ENCODE measurements at regions of chr1 and their contacts with region 1.

Region 1: GRCh38 chr1:149899460-149900293 is at the start of gene BOLA1:
- DNase-seq: peak; percentile 66 to 89 (median 76)
- ATAC-seq: peak; percentile 98 to 99
- H3K4me3 Mint-ChIP-seq: peak within 1 kb of the TSS; percentile 85 to 96 (median 94)
- H3K27ac Mint-ChIP-seq: peak within 1 kb of the TSS; percentile 89 to 98 (median 96)
- H3K4me1 Mint-ChIP-seq: peaks cover 6 to 26% (median 17%) of the 10 kb centered on the region in 4 donors
- H3K27me3 Mint-ChIP-seq: peaks cover 0 to 2% (median 0%) of the 10 kb centered on the region in 5 donors
- polyA plus RNA-seq, gene BOLA1: 19.7 to 34.1 (median 24.3) TPM

Region 2: DNA sequence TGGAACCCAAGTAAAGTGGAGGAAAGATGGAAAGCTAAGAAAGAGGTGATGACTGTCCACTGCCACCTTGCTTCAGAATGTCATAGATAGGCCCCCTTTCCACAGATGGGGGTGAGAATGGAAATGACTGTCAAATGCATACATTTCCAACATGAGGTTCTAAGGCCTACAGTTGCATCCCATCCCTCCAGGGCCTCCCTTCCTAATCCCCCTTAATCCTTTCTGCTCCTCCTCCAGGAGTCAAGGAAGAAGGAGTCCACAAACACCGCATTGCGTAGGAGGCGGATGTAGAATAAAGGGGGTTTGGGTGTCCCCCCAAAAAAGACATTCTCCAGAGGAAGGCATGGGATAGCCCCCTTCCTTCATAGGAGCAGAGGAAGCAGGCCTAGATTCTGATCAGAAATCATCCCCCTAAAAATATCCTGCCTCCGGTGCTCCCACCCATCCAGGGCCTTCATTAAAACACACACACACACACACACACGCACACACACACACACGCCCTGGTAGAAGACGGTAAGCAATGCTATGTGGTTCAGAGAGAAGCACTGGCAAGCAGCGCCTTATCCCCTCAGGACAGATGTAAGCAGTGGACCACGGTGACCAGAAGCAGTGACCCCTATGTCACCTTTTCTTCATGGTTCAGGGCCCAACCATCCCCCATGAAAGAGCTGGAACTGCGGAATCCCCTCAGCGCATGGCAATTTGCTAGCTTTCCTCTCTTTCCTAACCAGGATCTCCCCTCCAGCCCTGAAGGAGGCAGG is 15.9 kb after region 1 on chr1:
- POLR2A ChIA-PET with region 1: no interaction called
- DNase-seq: no peak
- ATAC-seq: no peak
- H3K4me3 Mint-ChIP-seq: peak overlapping the region; percentile 68 to 93 (median 90)
- H3K27ac Mint-ChIP-seq: peak overlapping the region; percentile 10 to 85 (median 66)
- H3K4me1 Mint-ChIP-seq: peaks cover 14 to 46% (median 42%) of the 10 kb centered on the region in 4 donors
- H3K27me3 Mint-ChIP-seq: peaks cover 0 to 4% (median 0%) of the 10 kb centered on the region in 5 donors

Region 3: GRCh38 chr1:149927503-149928387 is 28.1 kb after region 1 on chr1 and contains the start of gene SF3B4:
- POLR2A ChIA-PET with region 1: interaction called, 21 read pairs
- DNase-seq: peak; percentile 90 to 97 (median 95)
- ATAC-seq: peak; percentile 95 to 97
- H3K4me3 Mint-ChIP-seq: peak within 1 kb of the TSS; percentile 89 to 97 (median 92)
- H3K27ac Mint-ChIP-seq: peak within 1 kb of the TSS; percentile 96 to 99 (median 98)
- H3K4me1 Mint-ChIP-seq: peaks cover 30 to 63% (median 47%) of the 10 kb centered on the region in 4 donors
- H3K27me3 Mint-ChIP-seq: peaks cover 0 to 16% (median 5%) of the 10 kb centered on the region in 5 donors
- polyA plus RNA-seq, gene SF3B4: 55.7 to 90.4 (median 71.9) TPM

Region 4: GRCh38 chr1:150486964-150487762 is 587.5 kb after region 1 on chr1 and contains the start of gene TARS2:
- POLR2A ChIA-PET with region 1: interaction called, 10 read pairs
- DNase-seq: peak; percentile 76 to 99 (median 96)
- ATAC-seq: peak; percentile 100
- H3K4me3 Mint-ChIP-seq: peak within 1 kb of the TSS; percentile 90 to 100 (median 100)
- H3K27ac Mint-ChIP-seq: peak within 1 kb of the TSS; percentile 96 to 100 (median 99)
- H3K4me1 Mint-ChIP-seq: peaks cover 8 to 23% (median 20%) of the 10 kb centered on the region in 4 donors
- H3K27me3 Mint-ChIP-seq: no peaks in the 10 kb centered on the region
- polyA plus RNA-seq, gene TARS2: 23.9 to 37.2 (median 30.6) TPM

Measured in naive thymus-derived CD8-positive, alpha-beta T cell (primary cell).